WTC11 (cell line): ENCODE measurements at regions of chr1 and their contacts with region 1.

Region 1: GRCh38 chr1:31617917-31618660 is 600 bp downstream of the HCRTR1 start:
- DNase-seq: peak; percentile 82
- ATAC-seq: peak; percentile 80
- H3K4me3 Mint-ChIP-seq: peak overlapping the region; percentile 50
- H3K27ac Mint-ChIP-seq: no peak overlapping the region
- H3K4me1 Mint-ChIP-seq: peaks cover 14% of the 10 kb centered on the region
- H3K27me3 Mint-ChIP-seq: peaks cover 29% of the 10 kb centered on the region
- CTCF ChIP-seq: peak; percentile 87

Region 2: DNA sequence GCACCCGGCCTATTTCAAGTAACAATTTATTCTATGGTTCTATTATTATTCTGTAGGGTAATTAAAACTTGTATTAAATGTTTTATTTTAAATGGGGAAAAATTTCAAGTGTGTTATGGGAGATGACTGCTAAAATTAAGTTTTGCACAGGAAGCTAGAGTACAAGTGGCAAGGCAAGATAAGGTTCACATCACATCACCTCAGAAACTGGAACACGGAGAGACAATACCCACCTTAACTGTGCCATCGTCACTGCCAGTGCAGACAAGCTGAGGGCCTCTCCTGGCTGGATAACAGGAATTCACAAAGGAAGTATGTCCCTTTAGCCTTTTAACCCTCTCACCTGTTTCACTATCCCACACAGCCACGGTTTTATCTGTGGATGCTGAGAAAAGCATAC is 329.1 kb before region 1 on chr1:
- CTCF ChIA-PET with region 1: no interaction called
- POLR2A ChIA-PET with region 1: no interaction called
- DNase-seq: no peak
- ATAC-seq: no peak
- H3K4me3 Mint-ChIP-seq: no peak overlapping the region
- H3K27ac Mint-ChIP-seq: no peak overlapping the region
- H3K4me1 Mint-ChIP-seq: no peaks in the 10 kb centered on the region
- H3K27me3 Mint-ChIP-seq: no peaks in the 10 kb centered on the region
- CTCF ChIP-seq: no peak

Region 3: GRCh38 chr1:31394628-31395193 is 223.4 kb before region 1 on chr1:
- CTCF ChIA-PET with region 1: interaction called, 10 read pairs
- POLR2A ChIA-PET with region 1: no interaction called
- DNase-seq: peak; percentile 96
- ATAC-seq: peak; percentile 95
- H3K4me3 Mint-ChIP-seq: peak overlapping the region; percentile 63
- H3K27ac Mint-ChIP-seq: no peak overlapping the region
- H3K4me1 Mint-ChIP-seq: peaks cover 19% of the 10 kb centered on the region
- H3K27me3 Mint-ChIP-seq: peaks cover 9% of the 10 kb centered on the region
- CTCF ChIP-seq: peak; percentile 72

Region 4: GRCh38 chr1:31422505-31423319 is 195.4 kb before region 1 on chr1:
- CTCF ChIA-PET with region 1: interaction called, 10 read pairs
- POLR2A ChIA-PET with region 1: no interaction called
- DNase-seq: peak; percentile 83
- ATAC-seq: peak; percentile 74
- H3K4me3 Mint-ChIP-seq: no peak overlapping the region
- H3K27ac Mint-ChIP-seq: no peak overlapping the region
- H3K4me1 Mint-ChIP-seq: peaks cover 12% of the 10 kb centered on the region; the same call in 1 of the 2 replicates
- H3K27me3 Mint-ChIP-seq: no peaks in the 10 kb centered on the region
- CTCF ChIP-seq: peak; percentile 83

Region 5: DNA sequence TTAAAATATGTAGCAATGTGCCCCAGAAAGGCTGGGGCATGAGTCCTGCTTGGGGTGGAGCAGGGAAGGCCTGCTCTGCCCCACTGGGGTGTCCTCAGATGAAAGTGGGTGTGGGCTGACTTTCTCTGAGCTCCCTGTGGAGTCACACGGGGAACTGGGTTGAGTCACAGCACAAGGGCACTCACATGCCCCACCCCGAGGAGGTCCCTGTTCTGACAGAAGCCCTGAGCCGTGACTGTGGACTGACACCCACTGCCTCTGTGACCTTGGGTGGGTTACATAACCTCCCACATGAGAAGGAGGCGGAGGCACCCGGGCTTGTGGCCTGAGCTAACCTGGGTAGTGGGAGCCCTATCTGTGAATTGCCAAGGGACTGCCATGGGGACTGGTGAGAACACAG is 94.3 kb before region 1 on chr1:
- CTCF ChIA-PET with region 1: no interaction called
- POLR2A ChIA-PET with region 1: no interaction called
- DNase-seq: no peak
- ATAC-seq: no peak
- H3K4me3 Mint-ChIP-seq: no peak overlapping the region
- H3K27ac Mint-ChIP-seq: no peak overlapping the region
- H3K4me1 Mint-ChIP-seq: no peaks in the 10 kb centered on the region
- H3K27me3 Mint-ChIP-seq: no peaks in the 10 kb centered on the region; the same call in 1 of the 2 replicates
- CTCF ChIP-seq: no peak

Region 6: DNA sequence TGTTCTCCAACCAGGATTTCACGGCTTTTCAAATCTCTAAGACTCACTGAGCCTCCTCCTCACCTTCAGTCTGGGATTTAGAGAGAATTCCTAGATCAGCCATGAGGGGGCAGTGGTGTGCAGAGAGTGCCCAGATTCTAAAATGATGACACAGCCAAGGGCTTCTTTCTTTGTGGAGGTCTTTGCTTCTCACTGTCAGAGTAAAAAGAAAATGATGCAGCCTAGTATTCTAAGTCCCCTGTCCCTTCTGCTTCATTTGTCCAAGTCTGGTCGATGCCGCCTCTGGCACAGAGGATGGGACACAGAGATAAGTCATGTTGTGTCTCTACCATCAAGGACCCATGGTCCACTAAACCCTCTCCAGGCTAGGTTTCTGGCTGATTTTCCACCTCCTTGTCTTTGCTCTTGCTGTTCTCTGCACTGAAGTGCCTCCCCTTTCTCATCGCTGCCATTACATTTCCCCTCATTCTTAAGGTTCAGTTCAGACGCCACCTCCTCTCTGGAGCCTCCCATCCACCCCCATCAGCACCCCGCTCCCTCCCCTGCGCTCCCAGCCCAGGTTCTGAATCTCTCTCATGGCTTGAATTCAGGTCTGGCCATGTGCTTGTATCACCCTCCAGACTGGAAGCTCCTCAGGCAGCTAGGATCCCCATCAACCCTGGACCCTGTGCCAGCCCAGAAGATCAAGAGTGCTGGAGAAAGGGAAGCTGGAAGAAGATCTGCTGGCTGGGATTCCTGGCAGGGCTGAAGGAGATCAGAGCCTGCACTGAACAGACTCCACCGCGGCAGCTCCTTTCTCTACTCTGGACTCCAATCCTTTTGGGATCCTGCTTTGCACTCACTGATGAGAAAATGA is 53.7 kb before region 1 on chr1:
- CTCF ChIA-PET with region 1: interaction called, 38 read pairs
- POLR2A ChIA-PET with region 1: no interaction called
- DNase-seq: peak; percentile 75
- ATAC-seq: peak; percentile 81
- H3K4me3 Mint-ChIP-seq: no peak overlapping the region
- H3K27ac Mint-ChIP-seq: no peak overlapping the region
- H3K4me1 Mint-ChIP-seq: peaks cover 19% of the 10 kb centered on the region
- H3K27me3 Mint-ChIP-seq: no peaks in the 10 kb centered on the region; the same call in 1 of the 2 replicates
- CTCF ChIP-seq: peak; percentile 64

Region 7: GRCh38 chr1:31587720-31588394 is 30.2 kb before region 1 on chr1:
- CTCF ChIA-PET with region 1: interaction called, 38 read pairs
- POLR2A ChIA-PET with region 1: no interaction called
- DNase-seq: peak; percentile 85
- ATAC-seq: peak; percentile 79
- H3K4me3 Mint-ChIP-seq: peak overlapping the region; percentile 45
- H3K27ac Mint-ChIP-seq: no peak overlapping the region; the same call in 1 of the 2 replicates
- H3K4me1 Mint-ChIP-seq: peaks cover 20% of the 10 kb centered on the region
- H3K27me3 Mint-ChIP-seq: peaks cover 23% of the 10 kb centered on the region
- CTCF ChIP-seq: no peak; the same call in 1 of the 2 replicates

Region 8: GRCh38 chr1:31607360-31607759 is 10.7 kb before region 1 on chr1:
- CTCF ChIA-PET with region 1: interaction called, 18 read pairs
- POLR2A ChIA-PET with region 1: interaction called, 6 read pairs
- DNase-seq: no peak
- ATAC-seq: no peak
- H3K4me3 Mint-ChIP-seq: no peak overlapping the region
- H3K27ac Mint-ChIP-seq: no peak overlapping the region
- H3K4me1 Mint-ChIP-seq: 0 out of 2 replicates have a peak, but pooled peaks cover 3% of the 10 kb centered on the region
- H3K27me3 Mint-ChIP-seq: no peaks in the 10 kb centered on the region
- CTCF ChIP-seq: no peak

Region 9: GRCh38 chr1:31633053-31633452 is 15.0 kb after region 1 on chr1:
- CTCF ChIA-PET with region 1: interaction called, 17 read pairs
- POLR2A ChIA-PET with region 1: no interaction called
- DNase-seq: peak; percentile 75
- ATAC-seq: peak; percentile 86
- H3K4me3 Mint-ChIP-seq: no peak overlapping the region
- H3K27ac Mint-ChIP-seq: peak overlapping the region; percentile 76; the same call in 1 of the 2 replicates
- H3K4me1 Mint-ChIP-seq: no peaks in the 10 kb centered on the region
- H3K27me3 Mint-ChIP-seq: no peaks in the 10 kb centered on the region
- CTCF ChIP-seq: peak; percentile 54; the same call in 1 of the 2 replicates

Region 10: DNA sequence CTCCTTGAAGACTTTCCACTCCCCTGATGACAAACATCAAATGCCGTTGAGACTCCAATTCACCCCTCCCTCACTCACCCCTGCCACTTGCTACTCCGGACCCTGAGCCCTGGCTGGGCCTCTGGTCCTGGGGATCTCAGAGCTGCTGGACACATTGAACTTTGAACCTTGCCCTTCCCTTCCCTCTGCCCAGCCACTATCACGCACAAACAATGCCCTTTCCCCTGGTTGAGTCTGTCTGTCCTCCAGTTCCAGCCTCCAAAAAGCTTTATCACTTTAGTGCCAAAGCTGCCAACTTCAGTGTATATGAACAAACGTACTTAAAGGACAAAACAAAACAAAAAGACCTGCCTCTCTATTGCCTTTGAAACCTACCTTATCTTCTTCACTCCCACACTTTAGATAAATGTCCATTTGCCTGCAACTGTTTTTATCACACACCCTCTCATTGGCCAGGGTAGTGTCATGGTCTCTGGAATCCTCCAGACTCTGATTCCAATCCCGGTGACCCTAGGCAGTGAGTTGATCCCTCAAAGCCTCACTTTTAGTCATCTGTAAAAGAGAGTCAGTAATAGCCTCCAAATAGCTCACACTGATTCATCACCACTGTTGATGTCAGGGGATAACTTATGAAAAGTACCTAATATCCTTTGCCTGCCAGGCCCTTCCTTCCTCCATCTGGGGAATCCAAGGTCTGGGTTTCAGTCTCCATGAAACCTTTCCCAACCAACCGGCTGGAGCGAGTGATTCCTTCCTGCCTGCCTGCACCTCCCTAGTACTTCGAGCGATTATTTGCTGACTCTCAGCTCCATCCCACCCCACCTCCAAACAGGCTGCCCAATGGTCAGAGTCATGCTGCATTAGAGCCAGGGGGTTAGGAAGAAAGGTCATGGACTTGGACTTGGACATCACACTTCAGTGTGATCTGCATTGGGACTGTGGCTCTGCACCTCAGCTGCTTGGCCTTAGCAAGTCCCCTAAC is 213.6 kb after region 1 on chr1:
- CTCF ChIA-PET with region 1: no interaction called
- POLR2A ChIA-PET with region 1: no interaction called
- DNase-seq: no peak
- ATAC-seq: no peak
- H3K4me3 Mint-ChIP-seq: no peak overlapping the region
- H3K27ac Mint-ChIP-seq: no peak overlapping the region
- H3K4me1 Mint-ChIP-seq: no peaks in the 10 kb centered on the region
- H3K27me3 Mint-ChIP-seq: peaks cover 3% of the 10 kb centered on the region; the same call in 1 of the 2 replicates
- CTCF ChIP-seq: no peak